Common myeloid progenitor, CD34-positive (primary cell): ENCODE measurements at regions of chr16 and their contacts with region 1.

Region 1: DNA sequence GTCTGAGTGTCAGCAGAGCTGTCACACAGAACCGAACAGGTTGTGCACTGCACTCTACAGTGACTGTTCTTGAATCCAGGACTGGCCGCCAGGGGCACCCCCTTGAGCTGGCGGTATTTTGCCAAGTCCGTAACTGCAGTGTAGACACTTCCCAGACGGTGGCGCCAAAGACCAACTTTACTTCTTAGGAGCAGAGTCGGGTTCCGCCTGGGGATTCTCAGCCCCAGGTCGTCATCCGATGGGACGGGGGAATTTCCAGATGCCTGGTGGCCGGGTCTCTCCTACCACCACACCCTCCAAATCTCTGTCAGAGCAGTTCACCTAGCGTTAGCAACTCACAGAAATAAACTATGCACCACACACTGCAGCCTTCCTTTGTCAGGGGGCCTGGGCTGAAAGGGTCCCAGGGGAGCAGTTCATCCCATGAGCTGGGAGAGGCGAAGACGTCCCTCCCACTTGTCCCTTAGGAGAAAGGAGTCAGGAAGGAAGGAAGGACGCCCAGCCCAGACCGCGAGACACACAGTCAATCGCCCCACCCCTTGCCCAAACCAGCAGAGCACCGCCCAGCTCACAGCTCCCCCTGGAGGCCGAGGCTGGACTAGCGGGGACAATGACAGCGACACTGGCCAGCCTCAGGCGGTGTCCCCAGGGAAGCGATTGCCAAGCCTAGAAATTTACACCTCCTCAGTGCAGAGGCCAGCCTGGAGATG is 7.4 kb upstream of the RIPOR1 start:
- DNase-seq: peak; percentile 95 to 98 (median 96)
- H3K4me3 ChIP-seq: peak overlapping the region in 6 of 7 experiments; percentile 65 to 90 (median 74)
- H3K27ac ChIP-seq: peak overlapping the region; percentile 86 to 93
- H3K4me1 ChIP-seq: peaks cover 0 to 53% (median 48%) of the 10 kb centered on the region in 4 experiments
- H3K27me3 ChIP-seq: no peaks in the 10 kb centered on the region

Region 2: GRCh38 chr16:67490335-67491096 is 30.7 kb before region 1 on chr16:
- CTCF ChIA-PET with region 1: interaction called, 228 read pairs
- POLR2A ChIA-PET with region 1: interaction called, 3 read pairs
- DNase-seq: peak in 2 of 3 donors; percentile 12 to 25
- H3K4me3 ChIP-seq: no peak overlapping the region
- H3K27ac ChIP-seq: no peak overlapping the region
- H3K4me1 ChIP-seq: peaks cover 9 to 52% (median 31%) of the 10 kb centered on the region in 4 experiments
- H3K27me3 ChIP-seq: no peaks in the 10 kb centered on the region

Region 3: GRCh38 chr16:67546761-67547422 is 25.6 kb after region 1 on chr16:
- CTCF ChIA-PET with region 1: interaction called, 28 read pairs
- POLR2A ChIA-PET with region 1: interaction called, 11 read pairs
- DNase-seq: peak; percentile 72 to 84 (median 82)
- H3K4me3 ChIP-seq: peak overlapping the region in 6 of 7 experiments; percentile 10 to 68 (median 50)
- H3K27ac ChIP-seq: peak overlapping the region; percentile 72 to 82
- H3K4me1 ChIP-seq: peaks cover 7 to 81% (median 61%) of the 10 kb centered on the region in 4 experiments
- H3K27me3 ChIP-seq: no peaks in the 10 kb centered on the region

Region 4: DNA sequence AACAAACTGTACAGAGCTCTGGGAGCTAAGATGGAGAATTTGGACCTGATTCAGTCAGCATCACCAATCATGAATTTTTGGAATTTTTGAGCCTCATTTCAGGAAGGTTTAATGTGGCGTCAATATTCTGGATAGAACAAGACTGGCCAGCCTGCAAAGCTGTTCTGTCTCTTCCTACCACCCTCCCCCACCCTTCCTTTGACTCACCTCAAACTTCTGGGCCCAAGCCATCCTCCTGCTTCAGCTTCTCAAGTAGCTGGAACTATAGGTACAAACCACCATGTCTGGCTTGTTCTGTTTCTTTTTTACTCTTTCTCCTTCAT is 73.7 kb after region 1 on chr16:
- CTCF ChIA-PET with region 1: interaction called, 10 read pairs
- POLR2A ChIA-PET with region 1: no interaction called
- DNase-seq: peak in 1 of 3 donors; percentile 5
- H3K4me3 ChIP-seq: no peak overlapping the region
- H3K27ac ChIP-seq: no peak overlapping the region
- H3K4me1 ChIP-seq: no peaks in the 10 kb centered on the region
- H3K27me3 ChIP-seq: no peaks in the 10 kb centered on the region

Region 5: GRCh38 chr16:67632415-67633172 is 111.3 kb after region 1 on chr16:
- CTCF ChIA-PET with region 1: interaction called, 16 read pairs
- POLR2A ChIA-PET with region 1: interaction called, 3 read pairs
- DNase-seq: no peak
- H3K4me3 ChIP-seq: no peak overlapping the region
- H3K27ac ChIP-seq: no peak overlapping the region
- H3K4me1 ChIP-seq: no peaks in the 10 kb centered on the region
- H3K27me3 ChIP-seq: no peaks in the 10 kb centered on the region

Region 6: DNA sequence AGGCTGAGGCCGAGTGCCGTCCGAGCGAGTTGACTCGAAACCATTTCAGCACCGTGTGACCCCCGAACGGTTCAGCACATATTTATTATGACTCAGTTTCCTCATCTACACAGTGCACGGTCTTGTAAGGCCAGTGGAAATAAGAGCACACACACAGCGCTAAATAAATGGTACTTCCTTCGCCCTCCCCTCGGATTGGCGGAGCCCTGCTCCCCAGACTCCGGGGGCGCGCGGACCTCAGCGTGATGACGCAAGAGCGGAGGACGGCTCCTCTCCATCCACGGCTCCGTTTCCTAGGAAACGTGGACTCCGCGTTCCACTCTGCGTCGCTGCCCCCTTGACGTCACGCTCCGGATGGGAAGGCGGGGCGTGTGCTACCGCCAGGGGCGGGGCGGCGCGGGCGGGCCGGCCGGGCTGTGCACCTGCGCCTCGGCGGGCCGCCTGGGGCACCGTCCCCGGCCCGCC is 139.3 kb after region 1 on chr16 and contains the start of gene PARD6A:
- CTCF ChIA-PET with region 1: interaction called, 111 read pairs
- POLR2A ChIA-PET with region 1: no interaction called
- DNase-seq: peak; percentile 97 to 98 (median 97)
- H3K4me3 ChIP-seq: peak within 1 kb of the TSS; percentile 77 to 99 (median 92)
- H3K27ac ChIP-seq: peak within 1 kb of the TSS; percentile 66 to 90
- H3K4me1 ChIP-seq: peaks cover under 1 to 30% (median 23%) of the 10 kb centered on the region in 4 experiments
- H3K27me3 ChIP-seq: no peaks in the 10 kb centered on the region

Region 7: DNA sequence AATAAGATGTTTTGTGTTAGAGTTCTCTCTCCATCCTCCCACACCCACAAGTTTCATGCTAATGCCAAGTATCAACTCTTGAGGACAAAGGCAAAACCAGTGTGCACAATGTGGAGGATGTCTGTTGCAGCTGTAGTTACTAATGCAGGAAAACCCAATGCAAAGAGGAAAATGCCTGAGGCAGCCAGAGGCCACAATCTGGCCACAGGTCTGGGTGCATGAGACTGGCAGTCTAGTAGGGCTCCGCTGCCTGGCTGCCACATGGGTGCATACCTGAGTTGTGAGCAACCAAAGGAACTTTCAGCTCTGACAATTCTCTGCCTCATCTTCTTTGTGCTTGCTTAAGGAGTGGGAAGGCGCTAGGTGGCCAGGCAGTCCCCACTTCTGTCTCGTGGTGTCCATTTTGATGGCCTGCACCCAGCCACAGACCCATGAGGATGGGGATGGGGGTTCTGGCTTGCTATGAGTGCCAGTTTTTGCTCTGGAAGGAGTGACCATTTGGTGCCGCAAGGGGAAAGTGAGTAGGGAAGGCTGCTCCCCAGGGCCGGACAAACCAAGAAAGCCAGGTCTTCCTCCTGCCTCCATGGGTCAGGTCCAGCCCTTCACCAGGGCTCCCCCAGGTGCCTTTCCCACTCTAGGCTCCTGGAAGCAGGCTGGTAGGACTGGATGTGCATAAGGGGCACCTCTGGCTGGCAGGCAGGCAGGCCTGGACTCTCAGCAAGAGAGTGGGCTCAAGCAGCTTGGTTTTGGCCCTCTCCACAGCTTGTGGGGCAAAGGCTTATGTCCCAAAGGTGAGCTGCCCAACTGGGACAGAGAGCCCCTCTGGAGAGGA is 202.1 kb after region 1 on chr16:
- CTCF ChIA-PET with region 1: no interaction called
- POLR2A ChIA-PET with region 1: no interaction called
- DNase-seq: no peak
- H3K4me3 ChIP-seq: no peak overlapping the region
- H3K27ac ChIP-seq: no peak overlapping the region
- H3K4me1 ChIP-seq: peaks cover 2 to 17% (median 12%) of the 10 kb centered on the region in 4 experiments
- H3K27me3 ChIP-seq: no peaks in the 10 kb centered on the region